Adrenal gland (tissue), 19 donors: ENCODE measurements at regions of chr1 and their contacts with region 1.

Region 1: GRCh38 chr1:226325178-226325577 is 16.2 kb upstream of the LIN9 start:
- DNase-seq: no peak
- H3K4me3 ChIP-seq: no peak overlapping the region
- H3K27ac ChIP-seq: no peak overlapping the region
- H3K4me1 ChIP-seq: no peaks in the 10 kb centered on the region
- H3K27me3 ChIP-seq: peaks cover 5% of the 10 kb centered on the region
- CTCF ChIP-seq: no peak
- POLR2A ChIP-seq: no peak

Region 2: DNA sequence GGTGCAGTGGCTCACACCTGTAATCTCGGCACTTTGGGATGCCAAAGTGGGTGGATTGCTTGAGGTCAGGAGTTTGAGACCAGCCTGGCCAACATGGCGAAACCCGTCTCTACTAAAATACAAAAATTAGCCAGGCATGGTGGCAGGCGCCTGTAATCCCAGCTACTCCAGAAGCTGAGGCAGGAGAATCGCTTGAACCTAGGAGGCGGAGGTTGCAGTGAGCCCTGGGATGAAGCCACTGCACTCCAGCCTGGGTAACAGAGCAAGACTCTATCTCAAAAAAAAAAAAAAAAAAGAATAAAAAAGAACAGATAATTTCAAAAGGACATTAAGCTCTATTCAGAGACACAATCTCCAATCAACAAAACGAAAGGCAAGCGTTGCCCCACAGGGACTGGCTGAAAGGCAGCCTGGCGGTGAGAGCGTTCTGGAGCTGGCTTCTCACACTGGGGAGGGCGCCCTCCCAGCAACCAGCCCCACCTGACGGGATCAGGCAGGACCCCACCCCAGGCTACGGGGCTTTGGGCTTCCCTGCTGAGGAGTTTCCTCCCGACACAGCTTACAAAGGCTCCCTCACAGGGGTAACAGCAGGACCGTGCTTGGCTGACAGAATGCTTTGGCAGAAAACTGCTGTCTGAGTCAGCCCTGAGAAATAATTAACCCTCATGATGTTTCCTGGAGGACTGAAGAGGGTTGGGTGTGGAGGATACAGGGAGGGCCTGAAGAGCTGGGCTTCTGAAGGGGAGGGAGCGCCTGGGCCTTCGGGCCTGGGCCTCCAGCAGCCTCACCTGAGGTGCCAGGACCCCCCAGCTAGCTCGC is 578.6 kb before region 1 on chr1:
- intact Hi-C with region 1: no loop called
- DNase-seq: peak; percentile 65 to 85 (median 75)
- H3K4me3 ChIP-seq: peak overlapping the region in 2 of 4 donors; percentile 46 to 48
- H3K27ac ChIP-seq: peak overlapping the region; percentile 78 to 95 (median 89)
- H3K4me1 ChIP-seq: peaks cover 0 to 8% of the 10 kb centered on the region in 2 donors
- H3K27me3 ChIP-seq: no peaks in the 10 kb centered on the region
- CTCF ChIP-seq: peak in 5 of 6 experiments; percentile 10 to 49 (median 17)
- POLR2A ChIP-seq: peak; percentile 46 to 85

Region 3: DNA sequence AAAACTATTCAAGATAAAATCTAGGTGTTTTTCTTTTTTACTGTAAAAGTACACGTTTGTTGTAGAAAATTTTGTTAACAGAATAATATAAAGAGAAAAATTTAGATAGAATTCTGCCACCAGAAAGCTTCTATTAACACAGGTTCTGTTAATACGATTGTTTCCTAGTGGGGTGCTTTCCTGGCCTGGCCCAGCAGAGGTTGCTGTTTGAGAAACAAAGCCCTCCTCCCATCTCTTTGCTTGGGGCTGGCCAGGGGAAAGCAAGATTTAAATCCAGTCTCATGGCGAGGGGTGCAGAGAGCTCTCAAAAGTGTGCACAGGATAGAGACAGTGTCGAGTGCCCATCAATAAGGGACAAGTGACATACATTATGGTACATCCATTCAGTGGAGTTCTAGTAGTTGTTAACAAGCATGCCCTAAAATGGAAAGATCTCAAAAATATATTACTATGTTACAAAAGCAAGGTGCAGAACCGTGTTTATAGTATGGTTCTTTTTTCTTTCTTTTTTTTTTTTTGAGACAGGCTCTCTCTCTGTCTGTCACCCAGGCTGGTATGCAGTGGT is 124.1 kb before region 1 on chr1:
- intact Hi-C with region 1: loop called in 1 of 2 experiments (anchors 10 kb)
- DNase-seq: no peak
- H3K4me3 ChIP-seq: no peak overlapping the region
- H3K27ac ChIP-seq: no peak overlapping the region
- H3K4me1 ChIP-seq: no peaks in the 10 kb centered on the region
- H3K27me3 ChIP-seq: no peaks in the 10 kb centered on the region
- CTCF ChIP-seq: peak in 1 of 6 experiments; percentile 15
- POLR2A ChIP-seq: no peak